Motor neuron (in vitro differentiated cells): ENCODE measurements at regions of chr6 and their contacts with region 1.

Region 1: DNA sequence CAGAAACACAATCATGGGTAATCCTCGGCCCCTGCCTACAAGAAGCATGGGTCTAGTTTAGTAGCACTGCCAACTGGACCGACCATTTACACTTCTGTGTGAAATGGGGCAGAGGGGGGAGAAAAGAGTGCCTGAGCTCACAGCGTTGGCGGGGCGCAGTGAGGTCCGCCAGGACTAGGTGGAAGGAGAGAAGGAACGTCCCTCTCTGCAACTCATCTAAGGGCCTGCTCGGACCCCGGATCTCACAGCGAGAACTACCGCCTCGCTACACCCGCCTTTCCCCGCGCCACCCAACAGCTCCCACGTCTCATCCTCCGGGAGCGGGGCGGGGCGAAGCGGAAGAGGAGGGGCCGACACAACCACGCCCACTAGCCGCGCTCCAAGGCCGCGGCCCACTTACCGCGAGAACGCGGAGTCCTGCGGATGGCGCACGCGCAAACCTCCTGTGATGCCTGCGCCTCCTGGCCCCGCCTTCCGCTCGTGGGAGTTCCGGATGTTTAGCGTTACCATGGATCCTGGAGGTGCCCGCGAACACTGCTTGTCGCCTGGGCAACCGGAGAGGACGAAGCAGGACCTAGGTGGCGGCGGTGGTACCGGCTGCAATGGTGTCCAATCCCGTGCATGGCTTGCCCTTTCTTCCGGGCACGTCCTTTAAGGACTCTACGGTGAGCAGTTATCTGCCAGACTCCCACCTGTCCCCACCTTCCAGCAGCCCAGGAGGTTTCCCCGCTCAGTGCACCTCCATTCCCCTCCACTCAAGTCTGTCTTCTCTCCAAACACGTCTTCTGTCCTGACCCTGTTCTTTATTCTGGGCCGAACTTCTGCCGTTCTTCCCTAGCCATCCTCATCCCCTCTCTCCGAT is at the start of gene EFHC1:
- ATAC-seq: peak; percentile 75 to 94 (median 93)
- H3K4me3 ChIP-seq: peak within 1 kb of the TSS; percentile 43 to 69 (median 58)
- H3K27ac ChIP-seq: peak within 1 kb of the TSS; percentile 76 to 90
- H3K4me1 ChIP-seq: peaks cover 8 to 12% of the 10 kb centered on the region in 2 donors
- total RNA-seq, gene EFHC1: 15.5 to 74.2 (median 32.0) TPM

Region 2: DNA sequence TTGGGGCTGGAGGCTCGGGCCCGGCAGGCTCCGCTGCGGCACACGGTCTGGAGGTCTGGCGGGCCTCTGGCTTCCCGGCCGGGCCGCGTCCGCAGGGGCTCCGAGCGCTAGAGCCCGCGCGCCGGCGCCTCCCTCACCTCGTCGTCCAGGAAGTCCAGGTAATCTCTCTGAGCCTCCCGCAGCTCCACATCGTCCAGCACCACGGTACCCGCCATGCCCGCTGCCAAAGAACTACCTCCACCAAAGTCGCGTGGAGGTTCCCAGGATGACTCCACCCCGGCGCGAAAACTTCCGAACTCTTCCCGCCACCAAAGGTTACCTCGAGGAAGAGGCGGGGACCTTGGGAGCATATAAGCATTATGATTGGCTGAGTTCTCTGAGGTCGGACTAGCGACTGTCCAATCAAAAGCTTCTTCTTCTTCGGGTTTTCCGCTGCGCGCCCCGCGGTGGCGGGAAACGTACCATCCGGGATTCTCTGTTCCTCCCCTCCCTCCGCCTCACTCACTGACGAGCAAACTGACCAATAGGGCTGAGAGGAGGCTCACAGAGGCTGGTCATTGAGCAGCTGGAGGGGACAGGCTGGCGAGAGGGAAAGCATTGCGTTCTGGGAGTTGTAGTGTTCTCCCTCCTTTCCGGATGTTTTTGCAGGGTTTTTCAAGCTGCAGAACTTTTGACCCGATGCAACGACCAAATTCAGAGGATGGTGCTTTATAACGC is 135.4 kb before region 1 on chr6 and contains the start of gene MCM3:
- in situ Hi-C with region 1: loop called in 1 of 9 experiments (anchors 25 kb)
- ATAC-seq: peak; percentile 97 to 100 (median 99)
- H3K4me3 ChIP-seq: peak within 1 kb of the TSS; percentile 55 to 78 (median 64)
- H3K27ac ChIP-seq: peak within 1 kb of the TSS in 1 of 2 donors; percentile 9
- H3K4me1 ChIP-seq: peaks cover 2 to 8% of the 10 kb centered on the region in 2 donors
- total RNA-seq, gene MCM3: 12.7 to 92.8 (median 19.4) TPM

Region 3: GRCh38 chr6:52577022-52577777 is 157.2 kb after region 1 on chr6 and contains the start of gene TRAM2:
- in situ Hi-C with region 1: loop called in 1 of 9 experiments (anchors 25 kb)
- ATAC-seq: peak; percentile 63 to 89 (median 86)
- H3K4me3 ChIP-seq: peak within 1 kb of the TSS; percentile 57 to 92 (median 72)
- H3K27ac ChIP-seq: peak within 1 kb of the TSS; percentile 59 to 81
- H3K4me1 ChIP-seq: peaks cover 5 to 8% of the 10 kb centered on the region in 2 donors
- total RNA-seq, gene TRAM2: 1.8 to 38.0 (median 10.7) TPM

Region 4: DNA sequence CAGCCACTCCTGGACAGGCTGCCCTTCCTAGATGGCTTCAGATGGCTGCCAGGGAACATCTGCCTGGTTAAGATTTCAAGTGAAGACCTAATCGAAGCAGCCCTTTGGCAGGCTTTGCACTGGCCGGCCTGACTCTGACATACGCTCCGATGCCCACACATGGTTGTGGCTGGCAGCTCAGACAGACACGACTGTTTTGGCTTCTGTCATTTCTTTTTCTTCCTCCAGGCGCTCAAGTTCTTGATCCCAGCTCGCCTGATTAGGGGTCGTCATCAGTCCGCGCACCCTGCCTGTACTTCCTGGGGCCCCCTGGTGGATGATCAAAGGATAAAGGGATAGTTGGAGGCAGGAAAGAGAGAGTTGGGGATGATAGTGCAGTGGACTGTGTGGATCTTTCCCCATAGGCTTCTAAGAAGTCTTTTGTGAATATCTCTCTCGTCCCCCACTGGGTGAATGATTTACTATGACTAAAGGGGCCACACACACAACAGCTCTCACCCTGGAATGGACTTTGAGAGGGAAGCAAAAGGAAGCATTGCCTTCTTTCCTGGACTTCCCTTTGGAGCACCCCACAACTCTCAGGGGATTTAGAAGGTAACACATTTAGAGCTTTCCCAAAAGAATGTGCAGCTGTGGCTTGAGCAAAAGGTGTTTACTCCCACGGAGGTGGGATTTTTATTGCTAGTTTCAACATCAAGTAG is 178.2 kb after region 1 on chr6:
- in situ Hi-C with region 1: loop called in 3 of 9 experiments (anchors 10 to 25 kb)
- ATAC-seq: peak in 6 of 8 experiments; percentile 10 to 71 (median 24)
- H3K4me3 ChIP-seq: no peak overlapping the region
- H3K27ac ChIP-seq: no peak overlapping the region
- H3K4me1 ChIP-seq: peaks cover 6 to 16% of the 10 kb centered on the region in 2 donors

Region 5: DNA sequence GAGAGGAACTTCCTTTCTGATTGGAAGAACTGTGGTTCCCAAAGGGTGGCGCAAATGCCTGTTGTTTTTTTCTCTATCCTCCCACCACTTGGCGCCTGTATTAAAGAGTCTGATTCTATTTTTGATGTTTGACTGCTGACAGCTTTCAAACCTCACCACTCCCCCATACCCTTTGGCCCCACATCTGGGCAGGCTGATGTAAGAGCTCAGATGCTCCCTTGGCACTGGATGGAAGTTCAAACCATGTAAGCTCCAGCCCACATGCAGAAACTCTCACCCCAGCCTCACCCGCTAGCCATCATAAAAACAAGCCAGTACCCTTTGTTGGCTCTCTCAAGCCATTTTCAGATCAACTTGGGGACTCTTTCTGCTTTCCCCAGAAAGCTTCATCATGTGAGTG is 230.9 kb after region 1 on chr6:
- in situ Hi-C with region 1: loop called in 2 of 9 experiments (anchors 10 to 25 kb)
- ATAC-seq: no peak
- H3K4me3 ChIP-seq: no peak overlapping the region
- H3K27ac ChIP-seq: no peak overlapping the region
- H3K4me1 ChIP-seq: peaks cover 16 to 17% of the 10 kb centered on the region in 2 donors

Region 6: DNA sequence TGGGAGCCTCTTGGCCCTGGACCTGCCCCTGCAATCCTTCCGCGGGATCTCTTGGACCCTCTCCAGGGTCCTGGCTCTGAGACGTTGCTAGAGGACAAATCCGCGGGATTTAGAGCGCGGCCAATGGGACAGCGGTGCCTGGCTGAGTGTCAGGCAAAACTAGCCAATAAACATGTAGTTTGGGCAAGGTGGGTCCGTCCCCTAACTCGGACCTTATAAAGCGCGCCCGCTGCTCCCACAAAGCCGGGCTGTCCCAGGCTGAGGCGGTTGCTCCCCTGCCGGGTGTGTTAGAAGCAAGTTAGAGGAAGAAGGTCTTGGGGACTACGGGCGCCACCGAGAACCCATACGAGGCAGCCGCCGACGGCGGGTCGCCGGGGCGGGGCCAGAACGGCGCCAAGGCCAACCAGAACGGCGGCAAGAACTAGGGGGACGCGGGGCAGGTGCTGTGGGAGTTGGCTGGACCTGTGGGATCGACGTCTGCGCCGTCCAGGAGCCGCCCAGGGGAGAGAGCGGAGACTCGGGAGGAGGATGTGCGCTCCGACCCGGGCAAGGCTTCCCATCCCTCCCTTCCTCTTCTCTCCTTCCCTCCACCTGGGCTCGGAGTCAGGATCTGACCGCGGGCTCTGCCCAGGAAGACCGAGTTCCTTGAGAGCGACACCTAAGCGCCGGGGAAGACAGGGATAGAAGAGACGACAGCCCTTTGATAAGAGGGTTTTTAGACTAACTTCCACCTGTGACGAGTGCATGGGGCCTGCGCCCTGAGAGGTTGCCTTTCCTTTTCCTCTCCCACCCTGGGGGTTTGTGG is 244.3 kb after region 1 on chr6:
- in situ Hi-C with region 1: loop called (anchors 5 to 25 kb)
- ATAC-seq: peak; percentile 90 to 99 (median 98)
- H3K4me3 ChIP-seq: peak overlapping the region; percentile 52 to 83 (median 63)
- H3K27ac ChIP-seq: peak overlapping the region in 1 of 2 donors; percentile 9
- H3K4me1 ChIP-seq: peaks cover 9 to 11% of the 10 kb centered on the region in 2 donors